ENCODE measurements at regions of chrX and their contacts with region 1.

Region 1: GRCh38 chrX:64205735-64206491 is 405 bp upstream of the AMER1 start:
- DNase-seq: peak; percentile 86
- H3K4me3 Mint-ChIP-seq: peak overlapping the region; percentile 85
- H3K27ac Mint-ChIP-seq: peak overlapping the region; percentile 87
- H3K4me1 Mint-ChIP-seq: peaks cover 10% of the 10 kb centered on the region
- H3K27me3 Mint-ChIP-seq: no peaks in the 10 kb centered on the region

Region 2: DNA sequence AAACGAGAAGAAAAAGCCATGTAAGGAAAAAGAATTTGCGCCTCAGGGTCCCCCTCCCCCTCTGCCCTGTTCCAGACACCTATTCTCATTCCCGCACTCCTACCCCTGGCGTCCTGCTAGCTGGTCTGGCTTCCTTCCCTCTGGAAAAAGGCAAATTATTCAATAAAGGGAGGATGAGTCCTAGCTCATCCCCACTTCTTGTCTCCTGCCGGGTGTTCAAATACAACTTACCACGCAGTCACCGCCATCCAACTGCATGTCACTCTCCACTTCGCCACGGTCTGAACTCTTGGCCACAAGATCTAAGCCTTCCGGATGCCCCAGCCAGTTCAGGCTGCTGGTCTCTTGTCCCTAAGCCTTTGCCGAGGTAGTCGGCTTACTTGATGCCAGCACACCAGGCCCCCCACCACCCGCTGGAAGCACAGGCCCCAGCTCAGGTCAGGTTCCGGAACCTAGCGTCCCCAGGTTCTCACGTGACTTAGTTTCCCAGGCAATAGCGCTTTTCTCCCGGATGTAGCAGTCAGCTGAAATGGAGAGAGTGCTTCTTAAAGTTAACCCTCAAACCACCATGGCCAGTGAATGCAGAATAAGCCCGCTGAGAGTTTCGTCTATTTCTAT is 645.2 kb before region 1 on chrX:
- intact Hi-C with region 1: loop called (anchors 1 kb)
- DNase-seq: peak; percentile 31
- H3K4me3 Mint-ChIP-seq: peak overlapping the region; percentile 97
- H3K27ac Mint-ChIP-seq: peak overlapping the region; percentile 73
- H3K4me1 Mint-ChIP-seq: peaks cover 9% of the 10 kb centered on the region
- H3K27me3 Mint-ChIP-seq: no peaks in the 10 kb centered on the region

Region 3: GRCh38 chrX:63754860-63755582 is 450.9 kb before region 1 on chrX:
- intact Hi-C with region 1: loop called (anchors 2 kb)
- DNase-seq: peak; percentile 81
- H3K4me3 Mint-ChIP-seq: peak overlapping the region; percentile 97
- H3K27ac Mint-ChIP-seq: peak overlapping the region; percentile 94
- H3K4me1 Mint-ChIP-seq: peaks cover 56% of the 10 kb centered on the region
- H3K27me3 Mint-ChIP-seq: peaks cover 2% of the 10 kb centered on the region

Region 4: DNA sequence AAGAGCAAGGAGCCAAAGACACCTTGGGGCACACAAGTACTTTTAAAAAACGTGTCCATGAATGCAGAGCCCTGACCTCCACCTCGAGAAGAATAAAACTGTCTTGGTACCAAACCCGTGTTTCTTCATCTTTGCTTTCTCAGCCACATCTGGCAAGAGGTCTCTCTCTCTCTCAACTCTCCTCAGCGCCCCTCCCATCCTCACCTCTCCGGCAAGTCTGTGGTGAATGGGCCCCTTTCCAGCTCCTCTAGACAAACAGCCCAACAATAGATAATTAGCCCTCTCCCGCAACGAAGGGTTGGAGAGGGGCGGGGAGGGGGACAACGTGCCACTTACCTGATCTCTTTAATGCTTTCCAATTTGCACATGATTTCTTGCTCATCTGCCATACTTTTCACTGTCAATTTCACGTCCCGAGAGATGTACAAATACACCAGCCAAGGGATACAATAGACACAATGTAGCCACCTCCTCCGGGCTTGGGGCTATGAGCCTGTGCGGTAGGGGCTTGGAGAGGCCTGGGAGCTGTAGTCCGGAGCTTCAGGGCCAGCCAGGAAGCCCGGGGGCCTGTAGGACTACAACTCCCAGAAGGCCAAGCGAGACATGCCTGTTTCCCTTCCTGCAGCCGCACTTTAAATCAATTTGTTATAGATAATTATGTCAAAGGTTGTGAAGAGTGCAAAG is 770.2 kb after region 1 on chrX and contains the start of gene ZC4H2:
- intact Hi-C with region 1: loop called (anchors 5 kb)
- DNase-seq: peak; percentile 50
- H3K4me3 Mint-ChIP-seq: peak within 1 kb of the TSS; percentile 92
- H3K27ac Mint-ChIP-seq: peak within 1 kb of the TSS; percentile 80
- H3K4me1 Mint-ChIP-seq: peaks cover 19% of the 10 kb centered on the region
- H3K27me3 Mint-ChIP-seq: peaks cover 5% of the 10 kb centered on the region
- total RNA-seq, gene ZC4H2: 11.6 and 12.1 TPM in 2 replicates